Ovary (tissue), 10 donors: ENCODE measurements at regions of chr12 and their contacts with region 1.

Region 1: GRCh38 chr12:94817695-94818075 is 167.3 kb upstream of the TMCC3 start:
- DNase-seq: no peak
- H3K4me3 ChIP-seq: no peak overlapping the region
- H3K27ac ChIP-seq: no peak overlapping the region
- H3K4me1 ChIP-seq: peaks cover 2% of the 10 kb centered on the region
- H3K27me3 ChIP-seq: no peaks in the 10 kb centered on the region
- CTCF ChIP-seq: no peak
- EP300 ChIP-seq: no peak
- POLR2A ChIP-seq: no peak

Region 2: GRCh38 chr12:94801745-94802144 is 15.9 kb before region 1 on chr12:
- intact Hi-C with region 1: loop called in 1 of 4 experiments (anchors 2 kb)
- DNase-seq: no peak
- H3K4me3 ChIP-seq: no peak overlapping the region
- H3K27ac ChIP-seq: no peak overlapping the region
- H3K4me1 ChIP-seq: no peaks in the 10 kb centered on the region
- H3K27me3 ChIP-seq: no peaks in the 10 kb centered on the region
- CTCF ChIP-seq: no peak
- EP300 ChIP-seq: no peak
- POLR2A ChIP-seq: no peak